Vagina (tissue), 2 donors: ENCODE measurements at regions of chr2 and their contacts with region 1.

Region 1: DNA sequence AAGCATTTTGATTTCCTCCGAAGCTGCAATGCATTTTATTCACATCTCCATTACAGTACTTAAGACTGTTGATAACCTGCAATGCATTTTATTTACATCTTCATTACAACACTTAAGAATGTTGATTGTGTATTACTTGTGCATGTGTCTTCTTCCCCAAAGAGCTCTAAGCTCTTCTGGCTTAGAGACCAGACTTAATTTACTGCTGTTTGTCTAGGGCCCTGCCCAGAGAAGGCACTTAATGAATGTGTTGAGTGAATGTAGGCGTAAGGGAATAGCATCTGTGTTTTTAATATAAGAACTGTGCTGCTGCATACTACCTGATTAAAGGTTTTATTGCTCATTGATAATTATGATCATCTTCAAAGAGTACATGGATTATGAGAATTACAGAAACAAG is 295.6 kb downstream of the ZNF385B start:
- DNase-seq: no peak
- H3K4me3 ChIP-seq: no peak overlapping the region
- H3K27ac ChIP-seq: no peak overlapping the region
- H3K4me1 ChIP-seq: no peaks in the 10 kb centered on the region
- H3K27me3 ChIP-seq: no peaks in the 10 kb centered on the region
- CTCF ChIP-seq: no peak
- POLR2A ChIP-seq: no peak

Region 2: DNA sequence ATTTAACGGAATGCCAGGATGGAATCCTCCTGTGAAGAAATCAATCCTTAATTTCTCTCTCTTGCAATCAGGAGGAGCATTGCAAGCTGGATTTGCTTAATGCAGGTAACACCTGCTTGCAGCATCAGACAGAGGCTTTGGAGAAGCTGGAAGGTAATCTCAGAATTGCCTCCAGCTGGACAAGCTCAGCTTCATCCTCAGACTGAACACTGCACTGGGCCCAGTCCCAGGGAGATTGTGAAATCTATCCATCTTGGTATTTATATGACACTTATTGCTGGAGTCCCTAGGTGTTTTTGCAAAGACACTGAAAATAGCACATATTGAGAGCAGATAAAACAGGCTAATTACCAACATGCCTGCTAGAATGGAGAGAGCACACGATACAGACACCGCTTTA is 121.8 kb before region 1 on chr2:
- intact Hi-C with region 1: no loop called
- DNase-seq: no peak
- H3K4me3 ChIP-seq: no peak overlapping the region
- H3K27ac ChIP-seq: no peak overlapping the region
- H3K4me1 ChIP-seq: no peaks in the 10 kb centered on the region
- H3K27me3 ChIP-seq: no peaks in the 10 kb centered on the region
- CTCF ChIP-seq: no peak
- POLR2A ChIP-seq: no peak

Region 3: DNA sequence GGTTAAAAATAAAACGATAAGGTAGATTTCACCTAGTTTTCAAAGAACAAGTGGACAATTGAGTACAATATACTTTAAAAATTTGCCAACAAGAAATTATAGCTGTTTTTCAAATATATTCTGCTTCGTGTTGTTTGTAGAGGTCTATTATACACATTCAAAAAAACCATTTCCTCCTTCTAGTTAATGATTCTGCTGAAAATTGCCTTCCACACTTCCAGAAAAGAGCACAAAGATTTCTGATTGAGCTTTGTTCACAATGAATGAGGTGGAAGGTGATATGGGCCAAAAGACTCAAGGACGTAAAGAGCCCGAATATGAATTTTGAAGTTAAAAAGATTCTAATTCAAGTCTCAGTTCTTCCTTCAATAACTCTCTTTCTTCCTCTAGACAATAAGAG is 24.2 kb before region 1 on chr2:
- intact Hi-C with region 1: loop called (anchors 1 kb)
- DNase-seq: no peak
- H3K4me3 ChIP-seq: no peak overlapping the region
- H3K27ac ChIP-seq: no peak overlapping the region
- H3K4me1 ChIP-seq: no peaks in the 10 kb centered on the region
- H3K27me3 ChIP-seq: no peaks in the 10 kb centered on the region
- CTCF ChIP-seq: no peak
- POLR2A ChIP-seq: no peak